ENCODE measurements at regions of chr14 and their contacts with region 1.

Region 1: DNA sequence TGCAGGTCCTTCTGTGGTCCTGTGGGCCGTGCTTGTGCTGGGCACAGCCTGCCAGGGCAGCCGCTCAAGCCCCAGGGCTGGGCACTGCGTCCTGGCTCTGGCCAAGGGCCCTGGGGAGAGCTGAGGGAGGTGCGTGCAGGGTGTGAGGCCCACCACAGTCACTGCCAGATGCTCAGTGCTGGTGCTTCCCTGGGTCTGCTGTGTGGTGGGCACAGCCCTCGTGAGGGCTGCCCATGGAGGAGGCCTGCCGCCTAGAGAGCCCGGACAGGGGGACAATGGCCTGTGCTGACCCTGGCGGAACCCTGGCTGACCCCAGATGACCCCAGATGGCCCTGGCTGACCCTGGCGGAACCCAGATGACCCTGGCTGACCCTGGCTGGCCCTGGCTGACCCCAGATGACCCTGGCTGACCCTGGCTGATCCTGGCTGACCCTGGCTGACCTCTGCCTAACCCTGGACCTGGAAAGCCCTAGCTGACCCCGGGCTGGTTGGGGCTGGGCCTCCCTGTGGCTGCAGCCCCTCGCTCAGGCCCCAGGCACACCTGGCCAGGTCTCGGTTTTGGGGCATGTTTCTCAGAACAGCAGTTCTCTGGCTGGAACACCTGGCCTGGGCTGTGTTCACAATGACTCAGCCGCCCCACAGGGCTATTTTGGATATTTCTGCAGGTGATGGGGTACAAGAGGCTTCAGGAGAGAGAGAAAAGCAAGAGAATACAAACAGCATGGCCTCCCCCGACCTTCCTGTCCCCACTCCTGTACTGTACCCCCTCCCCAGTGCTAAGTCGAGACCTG is 55.4 kb downstream of the TMEM121 start:
- DNase-seq: peak in 1 of 5 donors; percentile 62
- H3K4me3 ChIP-seq: no peak overlapping the region
- H3K27ac ChIP-seq: no peak overlapping the region
- H3K4me1 ChIP-seq: no peaks in the 10 kb centered on the region
- H3K27me3 ChIP-seq: no peaks in the 10 kb centered on the region
- CTCF ChIP-seq: no peak

Region 2: DNA sequence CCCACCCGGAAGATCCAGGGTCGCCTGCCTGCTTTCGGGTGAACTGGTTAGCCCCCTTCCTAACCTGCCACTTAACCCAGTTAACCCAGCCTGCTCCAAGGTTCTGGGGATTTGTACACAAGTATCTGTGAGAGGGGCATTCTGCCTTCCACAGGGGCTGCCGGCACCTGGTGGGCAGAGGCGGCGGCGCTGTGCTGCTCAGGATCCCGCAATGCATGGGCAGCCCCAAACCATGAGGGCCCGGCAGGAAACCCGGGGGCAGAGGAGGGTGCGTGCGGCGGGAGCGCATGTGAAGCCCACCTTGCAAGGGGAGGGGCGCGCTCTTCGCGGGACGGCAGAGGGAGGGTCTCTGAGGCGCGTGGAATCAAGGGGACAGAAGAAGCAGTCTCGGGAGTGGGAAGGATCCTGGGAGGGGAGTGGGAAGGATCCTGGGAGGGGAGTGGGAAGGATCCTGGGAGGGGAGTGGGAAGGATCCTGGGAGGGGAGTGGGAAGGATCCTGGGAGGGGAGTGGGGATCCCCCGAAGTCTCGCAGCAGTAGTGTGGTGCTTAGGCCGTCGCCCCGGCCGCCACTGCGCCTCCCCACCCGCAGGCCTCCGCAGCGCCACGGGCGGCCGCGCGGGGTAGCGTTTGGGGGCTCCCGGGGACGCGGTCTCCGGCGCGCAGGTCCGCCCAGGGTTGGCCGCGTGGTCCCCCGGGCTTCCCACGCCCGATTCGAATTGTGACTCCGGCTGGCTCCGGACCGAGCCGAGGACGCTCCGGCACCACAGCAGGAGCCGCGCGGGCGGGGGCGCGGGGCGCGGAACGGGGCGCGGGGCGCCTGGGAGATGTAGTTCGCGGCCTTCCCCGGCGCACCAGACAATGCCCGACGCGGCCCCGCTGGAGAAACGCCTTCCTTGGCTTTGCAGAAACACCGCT is 167.0 kb before region 1 on chr14:
- intact Hi-C with region 1: no loop called
- DNase-seq: peak; percentile 69 to 91 (median 83)
- H3K4me3 ChIP-seq: peak overlapping the region in 2 of 3 donors; percentile 39 to 58
- H3K27ac ChIP-seq: no peak overlapping the region
- H3K4me1 ChIP-seq: peaks cover 0 to 9% (median 0%) of the 10 kb centered on the region in 3 donors
- H3K27me3 ChIP-seq: no peaks in the 10 kb centered on the region
- CTCF ChIP-seq: peak; percentile 39

Region 3: GRCh38 chr14:105700622-105701288 is 119.0 kb after region 1 on chr14:
- intact Hi-C with region 1: loop called (anchors 10 kb)
- DNase-seq: no peak
- H3K4me3 ChIP-seq: no peak overlapping the region
- H3K27ac ChIP-seq: no peak overlapping the region
- H3K4me1 ChIP-seq: no peaks in the 10 kb centered on the region
- H3K27me3 ChIP-seq: no peaks in the 10 kb centered on the region
- CTCF ChIP-seq: no peak